Activated B cell treated with CpG ODN at 0.5 μM for 24 hours (primary cell): ENCODE measurements at regions of chr18 and their contacts with region 1.

Region 1: DNA sequence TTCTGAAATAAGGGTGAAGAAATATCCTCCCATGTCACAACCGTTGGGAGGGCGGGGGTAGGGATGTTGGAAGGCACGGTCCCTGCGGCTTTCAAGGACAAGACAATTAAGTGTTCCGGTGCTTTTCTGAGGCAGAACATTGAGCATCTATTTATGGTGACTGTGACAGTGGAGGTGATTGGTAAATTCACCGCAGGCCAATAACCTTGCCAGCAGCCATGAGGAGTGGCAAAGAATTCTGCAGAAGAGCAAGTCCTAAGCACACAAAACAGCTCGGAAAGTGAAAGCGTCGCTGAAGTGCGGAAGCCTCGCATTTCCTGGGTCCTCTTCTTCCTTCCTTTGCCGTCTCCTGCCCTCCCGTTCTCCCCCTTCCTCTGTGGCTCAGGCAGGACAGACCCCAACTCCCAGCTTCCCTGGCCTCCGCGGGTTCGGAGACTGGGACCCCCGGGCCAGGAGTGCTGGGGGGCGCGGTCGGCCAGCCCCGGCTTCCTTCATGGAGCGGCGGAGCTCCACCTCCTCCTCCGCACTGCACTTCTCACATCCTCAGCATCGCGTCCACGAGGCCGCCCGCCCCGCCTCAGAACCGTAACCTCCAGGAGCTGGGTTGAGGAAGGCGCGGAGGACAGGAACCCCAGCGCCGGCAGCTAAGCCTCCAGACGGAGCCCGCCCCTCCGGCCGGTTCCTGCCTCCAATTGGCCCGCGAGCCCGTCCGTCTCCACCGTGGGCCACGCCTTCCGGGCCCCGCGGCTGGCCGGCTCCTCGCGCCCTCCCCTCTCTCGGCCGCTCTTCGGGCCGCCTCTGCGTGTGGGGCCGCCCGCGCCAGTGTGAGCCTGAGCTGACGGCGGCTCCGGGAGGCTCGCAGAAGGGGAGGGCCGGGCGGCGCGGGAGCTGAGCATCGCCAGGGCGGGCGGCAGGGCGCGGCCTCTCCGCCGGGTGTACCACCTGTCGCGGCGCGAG is at the start of gene ME2:
- DNase-seq: peak; percentile 98
- ATAC-seq: peak; percentile 94
- H3K4me3 Mint-ChIP-seq: peak within 1 kb of the TSS; percentile 98
- H3K27ac Mint-ChIP-seq: peak within 1 kb of the TSS; percentile 97
- H3K4me1 Mint-ChIP-seq: peaks cover 31% of the 10 kb centered on the region
- H3K27me3 Mint-ChIP-seq: no peaks in the 10 kb centered on the region
- CTCF ChIP-seq: no peak
- total RNA-seq, gene ME2: 58.2 and 63.5 TPM in 2 replicates

Region 2: GRCh38 chr18:50281295-50281971 is 597.2 kb before region 1 on chr18 and contains the start of gene MBD1:
- CTCF ChIA-PET with region 1: no interaction called
- POLR2A ChIA-PET with region 1: interaction called, 4 read pairs
- intact Hi-C with region 1: loop called (anchors 2 kb)
- DNase-seq: peak; percentile 90
- ATAC-seq: peak; percentile 94
- H3K4me3 Mint-ChIP-seq: peak within 1 kb of the TSS; percentile 97
- H3K27ac Mint-ChIP-seq: peak within 1 kb of the TSS; percentile 93
- H3K4me1 Mint-ChIP-seq: peaks cover 38% of the 10 kb centered on the region
- H3K27me3 Mint-ChIP-seq: no peaks in the 10 kb centered on the region
- CTCF ChIP-seq: no peak
- total RNA-seq, gene MBD1: 101 and 117 TPM in 2 replicates

Region 3: GRCh38 chr18:50836521-50836957 is 42.1 kb before region 1 on chr18:
- CTCF ChIA-PET with region 1: no interaction called
- POLR2A ChIA-PET with region 1: interaction called, 20 read pairs
- intact Hi-C with region 1: loop called (anchors 1 kb)
- DNase-seq: no peak
- ATAC-seq: peak; percentile 80
- H3K4me3 Mint-ChIP-seq: peak overlapping the region; percentile 16
- H3K27ac Mint-ChIP-seq: peak overlapping the region; percentile 35
- H3K4me1 Mint-ChIP-seq: peaks cover 30% of the 10 kb centered on the region
- H3K27me3 Mint-ChIP-seq: no peaks in the 10 kb centered on the region
- CTCF ChIP-seq: no peak

Region 4: GRCh38 chr18:50933684-50934083 is 55.1 kb after region 1 on chr18:
- CTCF ChIA-PET with region 1: no interaction called
- POLR2A ChIA-PET with region 1: no interaction called
- intact Hi-C with region 1: loop called (anchors 2 kb)
- DNase-seq: no peak
- ATAC-seq: no peak
- H3K4me3 Mint-ChIP-seq: no peak overlapping the region
- H3K27ac Mint-ChIP-seq: no peak overlapping the region
- H3K4me1 Mint-ChIP-seq: peaks cover 6% of the 10 kb centered on the region
- H3K27me3 Mint-ChIP-seq: no peaks in the 10 kb centered on the region
- CTCF ChIP-seq: no peak

Region 5: GRCh38 chr18:51029694-51030536 is 151.3 kb after region 1 on chr18 and contains the start of gene SMAD4:
- CTCF ChIA-PET with region 1: no interaction called
- POLR2A ChIA-PET with region 1: interaction called, 44 read pairs
- intact Hi-C with region 1: loop called (anchors 1 kb)
- DNase-seq: peak; percentile 98
- ATAC-seq: peak; percentile 85
- H3K4me3 Mint-ChIP-seq: peak within 1 kb of the TSS; percentile 96
- H3K27ac Mint-ChIP-seq: peak within 1 kb of the TSS; percentile 96
- H3K4me1 Mint-ChIP-seq: peaks cover 57% of the 10 kb centered on the region
- H3K27me3 Mint-ChIP-seq: no peaks in the 10 kb centered on the region
- CTCF ChIP-seq: no peak
- total RNA-seq, gene SMAD4: 83.8 and 94.9 TPM in 2 replicates

Region 6: DNA sequence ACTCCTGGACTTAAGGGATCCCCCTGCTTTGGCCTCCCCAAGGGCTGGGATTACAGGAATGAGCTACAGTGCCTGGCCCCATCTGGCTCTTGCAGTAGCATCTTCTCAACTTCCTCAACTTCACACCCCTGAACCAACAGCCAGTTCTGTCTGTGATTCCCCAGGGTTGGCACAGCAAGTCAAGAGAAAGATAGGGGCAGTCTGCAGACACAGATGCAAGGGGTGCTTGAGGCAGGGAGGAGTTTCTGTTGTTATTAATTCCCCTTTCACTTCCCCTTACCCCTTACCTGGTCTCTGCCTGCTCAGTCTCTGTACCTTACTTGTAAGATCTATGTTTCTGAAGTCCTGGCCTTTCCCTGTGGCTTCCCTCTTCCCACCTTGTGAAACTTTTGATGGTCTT is 373.0 kb after region 1 on chr18:
- CTCF ChIA-PET with region 1: no interaction called
- POLR2A ChIA-PET with region 1: no interaction called
- intact Hi-C with region 1: loop called (anchors 1 kb)
- DNase-seq: peak; percentile 38
- ATAC-seq: peak; percentile 99
- H3K4me3 Mint-ChIP-seq: no peak overlapping the region
- H3K27ac Mint-ChIP-seq: peak overlapping the region; percentile 86
- H3K4me1 Mint-ChIP-seq: peaks cover 22% of the 10 kb centered on the region
- H3K27me3 Mint-ChIP-seq: no peaks in the 10 kb centered on the region
- CTCF ChIP-seq: no peak